ENCODE measurements at regions of chr9 and their contacts with region 1.

Region 1: GRCh38 chr9:112361601-112362000 is 18.3 kb upstream of the HSDL2 start:
- DNase-seq: no peak
- ATAC-seq: peak; percentile 40
- H3K4me3 Mint-ChIP-seq: peak overlapping the region; percentile 41
- H3K27ac Mint-ChIP-seq: no peak overlapping the region
- H3K4me1 Mint-ChIP-seq: peaks cover 2% of the 10 kb centered on the region
- H3K27me3 Mint-ChIP-seq: no peaks in the 10 kb centered on the region
- CTCF ChIP-seq: peak; percentile 59

Region 2: DNA sequence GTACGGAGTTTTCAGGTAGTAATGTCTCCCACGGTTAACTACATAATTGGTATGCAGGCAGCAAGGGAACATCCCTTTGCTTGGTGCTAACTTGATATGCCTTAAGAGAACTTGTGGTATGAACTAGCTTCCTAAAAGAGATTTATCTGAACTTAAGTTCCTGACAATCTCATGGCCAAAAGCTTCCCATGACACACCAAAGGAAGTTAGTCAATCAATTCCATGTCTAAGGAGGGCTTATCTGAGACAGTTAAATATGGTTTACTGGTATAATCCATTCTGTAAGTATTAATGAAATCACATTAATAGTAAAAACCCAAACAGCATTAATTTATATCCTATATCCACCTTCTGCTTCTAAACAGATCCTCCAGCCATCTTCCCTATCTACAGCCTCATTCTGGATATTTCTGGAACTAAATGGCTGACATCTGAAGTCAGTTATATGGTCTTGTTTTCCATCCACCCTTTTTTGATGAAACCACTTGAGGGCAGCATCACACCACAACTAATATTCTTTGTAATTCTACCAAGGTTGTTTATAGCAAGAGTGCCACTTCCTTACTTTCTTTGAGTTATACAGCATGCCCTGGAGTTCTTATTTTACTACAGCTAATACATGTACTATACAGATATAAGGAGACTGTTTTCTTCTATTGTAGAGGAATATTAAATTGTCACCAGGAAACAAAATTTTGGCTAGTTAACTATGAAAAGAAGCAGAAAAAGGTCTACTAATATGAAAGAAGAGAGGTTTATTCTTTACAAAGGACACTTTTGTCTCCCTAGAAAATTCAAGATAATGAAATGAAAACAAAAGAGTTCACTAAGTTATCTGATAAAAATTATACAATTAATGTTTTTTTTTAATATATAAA is 601.6 kb before region 1 on chr9:
- CTCF ChIA-PET with region 1: interaction called, 35 read pairs
- POLR2A ChIA-PET with region 1: no interaction called
- intact Hi-C with region 1: loop called (anchors 1 kb)
- DNase-seq: no peak
- ATAC-seq: peak; percentile 84
- H3K4me3 Mint-ChIP-seq: no peak overlapping the region
- H3K27ac Mint-ChIP-seq: no peak overlapping the region
- H3K4me1 Mint-ChIP-seq: peaks cover 4% of the 10 kb centered on the region
- H3K27me3 Mint-ChIP-seq: no peaks in the 10 kb centered on the region
- CTCF ChIP-seq: peak; percentile 55

Region 3: DNA sequence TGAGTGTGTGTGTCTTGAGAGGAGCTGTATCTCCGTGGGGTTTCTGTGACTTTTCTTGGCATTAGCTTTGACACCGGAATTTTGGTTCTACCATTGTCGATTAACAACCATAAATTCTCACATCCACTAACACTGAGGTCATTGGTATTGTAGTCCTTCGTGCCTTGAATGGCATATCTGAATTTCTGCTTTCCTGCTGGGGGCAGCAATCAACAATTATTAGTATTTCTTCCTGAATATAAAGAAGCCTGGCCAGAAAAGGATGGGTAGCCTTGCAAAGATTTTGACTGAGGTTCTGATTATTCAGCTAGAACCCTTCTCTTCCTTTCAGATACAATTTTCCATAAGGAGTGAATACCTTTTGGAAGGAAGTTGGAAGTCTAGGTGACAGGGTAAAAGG is 533.4 kb before region 1 on chr9:
- CTCF ChIA-PET with region 1: interaction called, 3 read pairs
- POLR2A ChIA-PET with region 1: no interaction called
- intact Hi-C with region 1: loop called (anchors 1 kb)
- DNase-seq: no peak
- ATAC-seq: no peak
- H3K4me3 Mint-ChIP-seq: no peak overlapping the region
- H3K27ac Mint-ChIP-seq: no peak overlapping the region
- H3K4me1 Mint-ChIP-seq: peaks cover 10% of the 10 kb centered on the region
- H3K27me3 Mint-ChIP-seq: no peaks in the 10 kb centered on the region
- CTCF ChIP-seq: no peak

Region 4: DNA sequence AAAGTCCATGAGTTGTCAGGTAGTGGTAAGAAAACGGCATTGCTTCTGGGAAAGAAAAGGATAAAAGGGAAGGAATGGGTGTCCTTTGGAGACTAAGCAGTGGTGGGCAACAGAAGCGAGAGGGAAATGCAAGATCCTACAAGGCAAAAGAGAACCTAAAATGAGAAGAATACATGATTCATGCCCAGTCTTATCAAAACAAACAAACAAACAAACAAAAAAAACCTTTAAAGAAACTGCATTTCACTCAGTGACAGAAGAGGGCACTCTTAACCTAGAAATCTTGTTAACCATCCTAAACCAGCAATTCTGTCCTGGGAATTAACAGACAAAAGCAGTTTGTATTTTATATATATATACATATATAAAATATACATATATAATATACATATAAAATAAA is 275.0 kb before region 1 on chr9:
- CTCF ChIA-PET with region 1: interaction called, 35 read pairs
- POLR2A ChIA-PET with region 1: no interaction called
- intact Hi-C with region 1: loop called (anchors 1 kb)
- DNase-seq: no peak
- ATAC-seq: no peak
- H3K4me3 Mint-ChIP-seq: no peak overlapping the region
- H3K27ac Mint-ChIP-seq: no peak overlapping the region
- H3K4me1 Mint-ChIP-seq: peaks cover 4% of the 10 kb centered on the region
- H3K27me3 Mint-ChIP-seq: no peaks in the 10 kb centered on the region
- CTCF ChIP-seq: no peak

Measured in activated B cell treated with CpG ODN at 0.5 μM for 24 hours (primary cell).